Activated T-helper 2 cell treated with anti-CD3 and anti-CD28 coated beads, Interferon-gamma antibody, Interleukin-2, Interleukin-4, amounts not matched to agents 10 μg/mL and 5 μg/mL and 100 μg/mL, durations not matched to agents 14 hours and 24 hours and 36 hours (primary cell): ENCODE measurements at regions of chr3 and their contacts with region 1.

Region 1: GRCh38 chr3:72265256-72266015 is 480.5 kb upstream of the PROK2 start:
- DNase-seq: no peak
- H3K4me3 Mint-ChIP-seq: no peak overlapping the region
- H3K27ac Mint-ChIP-seq: peak overlapping the region; percentile 56
- H3K4me1 Mint-ChIP-seq: peaks cover 42% of the 10 kb centered on the region
- H3K27me3 Mint-ChIP-seq: no peaks in the 10 kb centered on the region

Region 2: GRCh38 chr3:71702131-71703024 is 563.1 kb before region 1 on chr3:
- intact Hi-C with region 1: loop called (anchors 10 kb)
- DNase-seq: peak; percentile 32
- H3K4me3 Mint-ChIP-seq: peak overlapping the region; percentile 35
- H3K27ac Mint-ChIP-seq: peak overlapping the region; percentile 89
- H3K4me1 Mint-ChIP-seq: peaks cover 48% of the 10 kb centered on the region
- H3K27me3 Mint-ChIP-seq: no peaks in the 10 kb centered on the region

Region 3: GRCh38 chr3:71998995-71999673 is 266.3 kb before region 1 on chr3:
- intact Hi-C with region 1: loop called (anchors 5 kb)
- DNase-seq: no peak
- H3K4me3 Mint-ChIP-seq: no peak overlapping the region
- H3K27ac Mint-ChIP-seq: peak overlapping the region; percentile 69
- H3K4me1 Mint-ChIP-seq: peaks cover 24% of the 10 kb centered on the region
- H3K27me3 Mint-ChIP-seq: peaks cover 2% of the 10 kb centered on the region

Region 4: GRCh38 chr3:72144773-72145505 is 120.5 kb before region 1 on chr3:
- intact Hi-C with region 1: loop called (anchors 10 kb)
- DNase-seq: peak; percentile 14
- H3K4me3 Mint-ChIP-seq: no peak overlapping the region
- H3K27ac Mint-ChIP-seq: no peak overlapping the region
- H3K4me1 Mint-ChIP-seq: peaks cover 17% of the 10 kb centered on the region
- H3K27me3 Mint-ChIP-seq: no peaks in the 10 kb centered on the region

Region 5: DNA sequence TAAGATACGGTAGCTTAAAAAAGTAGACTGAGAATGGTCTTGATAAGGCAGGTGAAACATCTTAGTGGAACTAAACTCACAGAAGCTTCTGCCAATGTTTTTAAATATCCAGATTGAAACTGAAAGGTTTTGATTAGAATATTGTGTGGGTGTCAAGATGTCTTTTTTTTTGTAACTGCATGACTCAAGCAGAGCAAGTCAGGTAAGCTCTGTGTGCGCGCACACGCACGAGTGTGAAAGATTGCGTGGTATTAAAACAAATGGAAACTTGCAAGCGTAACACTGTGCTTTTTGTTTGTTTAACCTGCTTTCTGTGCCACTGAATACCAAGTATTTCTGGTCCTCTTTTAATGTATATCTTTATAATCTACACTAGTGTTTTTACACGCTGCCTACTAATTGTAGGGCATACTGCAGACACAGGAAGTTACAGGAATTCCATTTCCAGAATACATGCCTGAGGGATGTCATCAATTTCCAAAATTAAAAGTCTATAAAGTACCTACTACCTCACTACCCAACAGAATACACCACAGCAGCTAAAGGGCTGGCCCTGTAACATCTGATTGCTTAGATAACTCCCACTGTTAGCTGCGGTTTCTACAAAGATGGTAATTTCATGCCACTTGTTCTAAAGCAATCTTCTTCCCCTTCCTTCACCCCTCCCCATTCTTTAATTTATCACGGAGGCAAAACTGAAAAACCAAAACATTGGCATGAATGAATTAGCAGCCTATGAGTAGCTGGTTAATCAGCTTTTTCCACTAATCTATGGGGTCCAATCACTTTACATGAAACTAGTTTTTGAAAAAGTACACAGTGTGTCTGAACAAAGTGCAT is 110.0 kb after region 1 on chr3:
- intact Hi-C with region 1: loop called (anchors 5 kb)
- DNase-seq: no peak
- H3K4me3 Mint-ChIP-seq: peak overlapping the region; percentile 54
- H3K27ac Mint-ChIP-seq: peak overlapping the region; percentile 86
- H3K4me1 Mint-ChIP-seq: peaks cover 61% of the 10 kb centered on the region
- H3K27me3 Mint-ChIP-seq: no peaks in the 10 kb centered on the region